ENCODE measurements at regions of chr14 and their contacts with region 1.

Region 1: GRCh38 chr14:104826189-104826860 is 25.4 kb downstream of the ZBTB42 start:
- DNase-seq: peak; percentile 91
- H3K4me3 ChIP-seq: peak overlapping the region; percentile 76
- H3K27ac ChIP-seq: peak overlapping the region; percentile 62
- H3K4me1 ChIP-seq: peaks cover 23% of the 10 kb centered on the region
- H3K27me3 ChIP-seq: no peaks in the 10 kb centered on the region
- CTCF ChIP-seq: peak; percentile 81

Region 2: DNA sequence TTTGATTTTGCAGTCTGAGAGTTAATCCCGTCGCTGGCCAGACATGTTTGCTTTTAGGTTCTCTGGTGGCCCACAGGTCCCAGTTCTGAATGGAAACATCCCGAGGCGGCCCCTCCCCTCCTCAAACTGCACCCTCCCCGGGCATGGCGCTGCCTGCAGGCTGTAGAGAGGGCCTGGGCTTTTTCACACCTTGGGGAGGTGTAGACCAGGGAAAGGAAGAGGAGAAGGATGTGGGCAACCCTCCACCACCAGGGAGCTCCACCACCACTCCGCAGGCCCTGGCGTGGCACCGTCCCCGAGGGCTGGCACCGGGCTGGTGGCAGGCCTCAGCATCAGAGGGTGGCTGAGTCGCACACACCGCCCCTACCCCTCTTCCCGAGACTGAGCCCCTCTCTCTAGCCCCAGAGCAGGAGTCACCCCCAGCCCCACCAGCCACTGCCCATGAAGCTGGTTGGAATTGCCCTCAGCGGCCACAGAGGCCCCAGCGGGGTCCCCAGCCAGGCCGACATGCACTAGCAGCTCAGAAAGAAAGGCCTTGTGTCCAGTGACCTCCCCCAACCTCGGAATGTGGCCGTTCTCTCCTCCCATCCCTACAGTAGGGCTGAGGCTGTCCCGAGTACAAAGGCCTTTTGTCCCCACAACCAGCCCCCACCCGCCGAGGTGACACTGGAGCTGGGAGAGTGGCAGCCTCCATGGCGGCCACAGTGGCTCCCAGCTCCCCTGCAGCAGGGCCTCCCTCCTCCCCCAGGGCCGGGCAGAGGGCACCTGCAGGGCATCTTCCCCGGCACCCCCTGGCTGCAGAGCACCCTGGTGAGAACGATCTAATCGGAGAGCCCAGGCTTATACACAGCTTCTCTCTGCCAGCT is 160.4 kb before region 1 on chr14:
- intact Hi-C with region 1: no loop called
- DNase-seq: peak; percentile 49
- H3K4me3 ChIP-seq: no peak overlapping the region
- H3K27ac ChIP-seq: peak overlapping the region; percentile 9
- H3K4me1 ChIP-seq: peaks cover 11% of the 10 kb centered on the region
- H3K27me3 ChIP-seq: peaks cover 4% of the 10 kb centered on the region
- CTCF ChIP-seq: peak; percentile 57

Region 3: DNA sequence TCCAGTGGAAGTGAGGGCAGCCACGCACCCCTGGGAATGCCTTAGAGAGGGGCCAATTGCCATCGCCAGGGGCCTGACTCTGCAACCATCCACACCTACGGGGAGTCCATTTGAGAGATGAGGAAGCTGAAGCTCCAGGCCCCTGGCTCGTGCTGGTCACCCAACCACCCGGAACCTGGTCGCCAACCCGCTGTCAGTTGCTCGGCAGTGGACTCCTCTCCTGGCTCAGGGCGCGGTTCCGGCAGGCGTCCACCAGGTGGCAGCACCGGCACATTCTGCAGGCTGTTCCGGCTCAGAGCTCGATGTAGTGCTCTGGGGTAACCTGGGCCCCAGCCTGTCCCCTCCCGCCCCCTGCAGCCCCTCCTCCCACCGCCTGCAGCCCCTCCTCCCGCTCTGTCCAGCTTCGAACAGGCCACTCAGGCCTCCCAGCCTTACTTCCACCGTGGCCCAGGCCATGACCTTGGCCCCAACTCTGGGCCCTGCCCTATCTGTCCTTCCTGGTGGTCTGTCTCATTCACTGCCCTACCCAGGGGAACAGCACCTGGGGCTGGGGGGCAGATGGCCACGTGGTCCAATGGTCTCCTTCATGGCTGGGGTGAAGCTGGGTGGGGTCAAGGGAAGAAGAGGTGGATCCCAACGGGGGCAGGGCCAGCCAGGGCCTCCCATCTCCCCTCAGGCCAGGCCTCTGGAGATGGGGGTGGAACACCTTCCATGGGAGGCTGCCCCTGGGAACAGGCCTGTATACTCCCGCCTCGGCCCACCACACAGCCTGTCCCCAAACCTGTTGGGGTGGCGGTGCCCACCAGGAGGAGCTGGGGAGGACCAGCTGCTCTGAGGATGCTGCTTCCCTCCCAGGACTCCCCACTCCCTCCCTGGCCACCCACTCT is 57.6 kb before region 1 on chr14:
- intact Hi-C with region 1: loop called (anchors 5 kb)
- DNase-seq: peak; percentile 89
- H3K4me3 ChIP-seq: no peak overlapping the region
- H3K27ac ChIP-seq: peak overlapping the region; percentile 48
- H3K4me1 ChIP-seq: peaks cover 12% of the 10 kb centered on the region
- H3K27me3 ChIP-seq: no peaks in the 10 kb centered on the region
- CTCF ChIP-seq: peak; percentile 98

Measured in left ventricle myocardium inferior (tissue), 1 donor.